CD4-positive, alpha-beta T cell (primary cell): ENCODE measurements at regions of chr13 and their contacts with region 1.

Region 1: GRCh38 chr13:32315238-32316027 is at the starts of genes BRCA2 and ZAR1L:
- DNase-seq: peak; percentile 74 to 95 (median 82)
- ATAC-seq: peak; percentile 94
- H3K4me3 ChIP-seq: peak within 1 kb of the TSS; percentile 84
- H3K4me3 Mint-ChIP-seq: peak within 1 kb of the TSS; percentile 96
- H3K27ac ChIP-seq: peak within 1 kb of the TSS; percentile 99 to 100
- H3K27ac Mint-ChIP-seq: peak within 1 kb of the TSS; percentile 100
- H3K4me1 ChIP-seq: peaks cover 15% of the 10 kb centered on the region
- H3K4me1 Mint-ChIP-seq: peaks cover 16% of the 10 kb centered on the region
- H3K27me3 ChIP-seq: no peaks in the 10 kb centered on the region
- H3K27me3 Mint-ChIP-seq: no peaks in the 10 kb centered on the region
- CTCF ChIP-seq: no peak
- total RNA-seq, gene BRCA2: 1.9 to 2.4 TPM
- total RNA-seq, gene ZAR1L: not detected

Region 2: GRCh38 chr13:31161828-31162590 is 1153.4 kb before region 1 on chr13 and contains the start of gene HSPH1:
- CTCF ChIA-PET with region 1: no interaction called
- POLR2A ChIA-PET with region 1: interaction called, 6 read pairs
- intact Hi-C with region 1: loop called in 1 of 2 experiments (anchors 10 kb)
- DNase-seq: peak; percentile 95 to 99 (median 98)
- ATAC-seq: peak; percentile 81
- H3K4me3 ChIP-seq: peak within 1 kb of the TSS; percentile 93
- H3K4me3 Mint-ChIP-seq: peak within 1 kb of the TSS; percentile 96
- H3K27ac ChIP-seq: peak within 1 kb of the TSS; percentile 94 to 95
- H3K27ac Mint-ChIP-seq: peak within 1 kb of the TSS; percentile 98
- H3K4me1 ChIP-seq: peaks cover 17% of the 10 kb centered on the region
- H3K4me1 Mint-ChIP-seq: peaks cover 46% of the 10 kb centered on the region
- H3K27me3 ChIP-seq: no peaks in the 10 kb centered on the region
- H3K27me3 Mint-ChIP-seq: no peaks in the 10 kb centered on the region
- CTCF ChIP-seq: peak; percentile 13
- total RNA-seq, gene HSPH1: 226 to 238 TPM

Region 3: DNA sequence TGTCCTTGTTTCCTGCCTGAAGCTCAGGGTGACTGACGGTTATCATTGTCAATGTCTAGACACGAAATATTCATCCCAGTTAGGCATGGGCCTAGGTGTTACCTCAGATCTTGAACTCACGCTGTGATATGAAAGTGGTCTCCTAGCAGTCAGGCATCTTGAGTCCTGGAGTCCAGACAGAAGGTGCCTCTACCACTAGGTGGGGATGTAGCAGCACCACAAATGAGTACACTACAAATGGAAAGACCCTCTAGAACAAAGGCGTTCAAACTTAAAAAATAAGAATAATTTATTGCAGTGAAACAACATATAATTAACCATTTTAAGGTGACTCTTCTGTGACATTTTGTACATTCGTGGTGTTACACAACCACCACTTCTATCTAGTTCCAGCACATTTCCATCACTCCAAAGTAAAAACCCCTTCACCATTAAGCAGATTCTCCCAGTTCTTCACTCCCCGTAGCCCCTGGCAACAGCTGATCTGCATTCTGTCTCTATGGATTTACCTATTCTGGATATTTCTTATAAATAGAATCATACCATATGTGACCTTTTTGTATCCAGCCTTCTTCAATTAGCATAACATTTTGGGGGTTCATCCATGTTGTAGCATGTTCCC is 295.7 kb before region 1 on chr13:
- CTCF ChIA-PET with region 1: no interaction called
- POLR2A ChIA-PET with region 1: no interaction called
- intact Hi-C with region 1: loop called (anchors 1 to 2 kb)
- DNase-seq: peak in 9 of 14 experiments; percentile 2 to 62 (median 21)
- ATAC-seq: peak; percentile 68
- H3K4me3 ChIP-seq: no peak overlapping the region
- H3K4me3 Mint-ChIP-seq: no peak overlapping the region
- H3K27ac ChIP-seq: no peak overlapping the region
- H3K27ac Mint-ChIP-seq: no peak overlapping the region
- H3K4me1 ChIP-seq: no peaks in the 10 kb centered on the region
- H3K4me1 Mint-ChIP-seq: no peaks in the 10 kb centered on the region
- H3K27me3 ChIP-seq: no peaks in the 10 kb centered on the region
- H3K27me3 Mint-ChIP-seq: no peaks in the 10 kb centered on the region
- CTCF ChIP-seq: peak; percentile 51

Region 4: GRCh38 chr13:32443111-32443510 is 127.7 kb after region 1 on chr13:
- CTCF ChIA-PET with region 1: no interaction called
- POLR2A ChIA-PET with region 1: interaction called, 3 read pairs
- intact Hi-C with region 1: loop called in 1 of 2 experiments (anchors 5 kb)
- DNase-seq: peak in 11 of 14 experiments; percentile 9 to 76 (median 21)
- ATAC-seq: peak; percentile 77
- H3K4me3 ChIP-seq: no peak overlapping the region
- H3K4me3 Mint-ChIP-seq: no peak overlapping the region
- H3K27ac ChIP-seq: no peak overlapping the region
- H3K27ac Mint-ChIP-seq: no peak overlapping the region
- H3K4me1 ChIP-seq: no peaks in the 10 kb centered on the region
- H3K4me1 Mint-ChIP-seq: peaks cover 3% of the 10 kb centered on the region
- H3K27me3 ChIP-seq: no peaks in the 10 kb centered on the region
- H3K27me3 Mint-ChIP-seq: no peaks in the 10 kb centered on the region
- CTCF ChIP-seq: peak; percentile 53

Region 5: DNA sequence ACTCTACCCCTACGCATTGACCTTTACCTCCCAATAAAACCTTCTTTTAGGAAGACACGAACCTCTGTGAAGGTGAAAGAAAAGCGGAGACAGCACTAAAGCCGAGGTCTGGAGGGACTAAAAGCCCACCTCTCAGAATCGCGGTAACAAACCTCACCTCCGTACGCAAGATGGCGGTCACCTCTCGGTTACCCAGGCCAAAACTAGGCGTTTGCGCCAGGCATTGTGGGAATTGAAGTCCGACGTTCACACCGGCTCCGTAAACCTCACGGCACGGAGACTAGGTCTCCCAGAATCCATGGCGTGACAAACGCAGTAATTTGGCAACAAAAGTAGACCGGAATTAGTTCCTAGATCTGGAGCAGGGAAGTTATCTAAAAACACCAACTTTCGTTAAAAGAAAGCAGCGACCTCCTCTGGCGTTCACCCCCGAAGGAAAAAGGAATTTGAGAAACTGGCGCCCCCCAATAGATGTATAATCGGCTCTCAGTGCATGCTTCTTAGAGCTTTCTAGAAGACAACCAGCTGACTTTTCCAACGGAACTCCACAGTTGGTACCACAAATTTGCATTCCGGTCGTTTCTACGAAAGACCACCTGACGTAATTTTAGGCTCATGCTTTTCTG is 223.3 kb after region 1 on chr13 and contains the start of gene N4BP2L2:
- CTCF ChIA-PET with region 1: no interaction called
- POLR2A ChIA-PET with region 1: interaction called, 28 read pairs
- intact Hi-C with region 1: loop called (anchors 2 kb)
- DNase-seq: peak; percentile 82 to 97 (median 88)
- ATAC-seq: peak; percentile 96
- H3K4me3 ChIP-seq: peak within 1 kb of the TSS; percentile 81
- H3K4me3 Mint-ChIP-seq: peak within 1 kb of the TSS; percentile 100
- H3K27ac ChIP-seq: peak within 1 kb of the TSS; percentile 98
- H3K27ac Mint-ChIP-seq: peak within 1 kb of the TSS; percentile 100
- H3K4me1 ChIP-seq: peaks cover 18% of the 10 kb centered on the region
- H3K4me1 Mint-ChIP-seq: peaks cover 55% of the 10 kb centered on the region
- H3K27me3 ChIP-seq: no peaks in the 10 kb centered on the region
- H3K27me3 Mint-ChIP-seq: peaks cover 5% of the 10 kb centered on the region
- CTCF ChIP-seq: peak; percentile 33
- total RNA-seq, gene N4BP2L2: 171 TPM

Region 6: DNA sequence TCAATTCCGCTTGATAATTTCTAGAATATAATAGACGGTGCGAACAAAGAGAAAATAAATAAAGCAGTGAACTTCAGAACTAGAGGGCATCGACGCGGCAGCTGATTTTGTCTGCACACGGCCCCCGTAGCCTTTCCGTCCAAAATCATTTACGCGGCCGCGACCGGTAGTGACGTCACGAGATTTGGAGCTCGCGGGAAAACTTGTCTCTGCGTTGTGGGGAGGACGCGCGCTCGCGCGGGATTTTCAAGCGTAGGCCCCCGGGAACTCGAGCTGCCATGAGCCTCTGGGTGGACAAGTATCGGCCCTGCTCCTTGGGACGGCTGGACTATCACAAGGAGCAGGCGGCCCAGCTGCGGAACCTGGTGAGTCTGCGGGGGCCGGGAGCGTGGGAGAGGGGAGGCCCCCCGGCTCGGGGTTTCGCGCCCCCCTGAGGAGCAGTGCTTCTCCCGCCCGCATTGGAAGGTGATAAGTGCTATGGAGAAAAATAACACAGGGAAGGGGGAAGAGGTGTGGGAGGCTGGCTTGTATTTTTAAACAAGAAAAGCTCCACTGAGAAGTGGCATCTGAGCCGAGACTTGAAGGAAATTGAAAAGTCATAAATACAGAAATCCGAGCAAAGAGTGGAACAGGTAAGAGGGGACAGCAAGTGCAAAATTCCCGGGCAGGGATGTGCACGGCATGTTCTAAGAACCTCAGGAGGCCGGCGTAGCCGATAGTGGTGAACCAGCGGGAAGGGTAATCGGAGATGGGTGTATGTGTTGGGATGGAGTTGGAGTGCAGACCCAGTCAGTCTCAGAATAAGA is 1502.7 kb after region 1 on chr13 and contains the start of gene RFC3:
- CTCF ChIA-PET with region 1: no interaction called
- POLR2A ChIA-PET with region 1: interaction called, 7 read pairs
- intact Hi-C with region 1: loop called in 1 of 2 experiments (anchors 10 kb)
- DNase-seq: peak; percentile 81 to 95 (median 85)
- ATAC-seq: peak; percentile 89
- H3K4me3 ChIP-seq: peak within 1 kb of the TSS; percentile 78
- H3K4me3 Mint-ChIP-seq: peak within 1 kb of the TSS; percentile 95
- H3K27ac ChIP-seq: peak within 1 kb of the TSS; percentile 37 to 57
- H3K27ac Mint-ChIP-seq: peak within 1 kb of the TSS; percentile 86
- H3K4me1 ChIP-seq: peaks cover 9% of the 10 kb centered on the region
- H3K4me1 Mint-ChIP-seq: peaks cover 14% of the 10 kb centered on the region
- H3K27me3 ChIP-seq: no peaks in the 10 kb centered on the region
- H3K27me3 Mint-ChIP-seq: no peaks in the 10 kb centered on the region
- CTCF ChIP-seq: no peak
- total RNA-seq, gene RFC3: 4.5 TPM